GM12878 (cell line): ENCODE measurements at regions of chr1 and their contacts with region 1.

Region 1: GRCh38 chr1:19390901-19391595 is 78.9 kb downstream of the SLC66A1 start:
- DNase-seq: peak; percentile 70
- ATAC-seq: peak; percentile 82
- H3K4me3 ChIP-seq: peak overlapping the region; percentile 63; the same call in 1 of the 2 replicates
- H3K27ac ChIP-seq: peak overlapping the region; percentile 81
- H3K4me1 ChIP-seq: peaks cover 41% of the 10 kb centered on the region
- H3K27me3 ChIP-seq: no peaks in the 10 kb centered on the region
- CTCF ChIP-seq: peak; percentile 81 to 92 (median 84)
- EP300 ChIP-seq: no peak; a peak in 1 of 4 replicates
- POLR2A ChIP-seq: no peak
- RAD21 ChIP-seq: peak; percentile 69

Region 2: DNA sequence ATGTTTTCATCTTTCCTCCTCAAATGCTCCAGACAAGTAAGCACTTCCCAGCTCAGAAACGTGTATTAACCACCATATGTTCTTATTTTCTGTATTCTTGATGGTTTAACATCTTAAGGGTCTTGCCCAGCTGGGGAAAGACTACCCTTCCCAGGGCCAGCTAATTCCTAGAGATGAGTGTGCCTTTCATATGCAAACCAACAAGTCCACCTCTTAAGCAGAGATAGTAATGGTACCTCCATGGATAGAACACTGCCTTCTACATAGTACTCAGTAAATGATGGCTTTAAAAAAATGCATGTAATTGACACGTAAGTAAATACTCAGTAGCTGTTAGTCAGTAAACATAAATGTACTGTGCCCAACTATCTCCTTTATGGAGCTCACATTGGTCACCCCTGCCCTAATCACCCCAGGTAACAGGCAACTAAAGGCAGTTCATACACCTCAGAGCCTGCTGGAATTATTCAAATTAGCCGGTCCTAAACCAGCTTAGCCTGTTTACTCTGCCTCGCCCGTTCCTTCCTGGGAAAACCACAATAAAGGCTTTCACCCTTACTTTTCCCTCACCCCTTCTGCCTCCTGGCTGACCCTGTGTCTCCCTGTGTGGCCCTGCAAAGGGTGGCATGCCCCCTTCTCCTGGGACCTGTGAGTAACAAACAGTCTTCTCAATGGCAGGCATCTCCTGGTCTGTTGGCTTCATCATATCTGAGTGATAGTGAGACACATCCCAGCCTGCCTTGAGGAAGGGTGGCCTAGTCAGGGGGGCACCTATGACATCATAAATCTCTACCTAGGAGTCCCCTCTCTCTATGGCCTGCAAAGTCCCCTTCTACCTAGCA is 950.4 kb before region 1 on chr1:
- CTCF ChIA-PET with region 1: no interaction called
- POLR2A ChIA-PET with region 1: no interaction called
- RAD21 ChIA-PET with region 1: no interaction called
- SMC1A ChIA-PET with region 1: no interaction called
- in situ Hi-C with region 1: no loop called
- intact Hi-C with region 1: no loop called
- DNase-seq: no peak
- ATAC-seq: no peak
- H3K4me3 ChIP-seq: no peak overlapping the region
- H3K27ac ChIP-seq: no peak overlapping the region
- H3K4me1 ChIP-seq: no peaks in the 10 kb centered on the region
- H3K27me3 ChIP-seq: no peaks in the 10 kb centered on the region; a peak in 1 of 4 replicates
- CTCF ChIP-seq: no peak
- EP300 ChIP-seq: no peak
- POLR2A ChIP-seq: no peak
- RAD21 ChIP-seq: no peak

Region 3: GRCh38 chr1:19468397-19468956 is 77.4 kb after region 1 on chr1:
- CTCF ChIA-PET with region 1: interaction called, 13 read pairs
- POLR2A ChIA-PET with region 1: no interaction called
- RAD21 ChIA-PET with region 1: interaction called, 8 read pairs
- SMC1A ChIA-PET with region 1: interaction called, 6 read pairs
- in situ Hi-C with region 1: no loop called
- intact Hi-C with region 1: no loop called
- DNase-seq: no peak
- ATAC-seq: peak; percentile 88
- H3K4me3 ChIP-seq: peak overlapping the region; percentile 3; the same call in 1 of the 2 replicates
- H3K27ac ChIP-seq: peak overlapping the region; percentile 28
- H3K4me1 ChIP-seq: peaks cover 34% of the 10 kb centered on the region
- H3K27me3 ChIP-seq: no peaks in the 10 kb centered on the region
- CTCF ChIP-seq: peak in 1 of 3 experiments; percentile 18; a peak in 1 of 6 replicates
- EP300 ChIP-seq: no peak
- POLR2A ChIP-seq: 0 out of 2 replicates have a peak, but pooled peaks have one; percentile 35
- RAD21 ChIP-seq: no peak

Region 4: GRCh38 chr1:19485362-19486187 is 94.5 kb after region 1 on chr1 and contains the start of gene CAPZB:
- CTCF ChIA-PET with region 1: interaction called, 19 read pairs
- POLR2A ChIA-PET with region 1: interaction called, 3 read pairs
- RAD21 ChIA-PET with region 1: interaction called, 11 read pairs
- SMC1A ChIA-PET with region 1: interaction called, 10 read pairs
- in situ Hi-C with region 1: no loop called
- intact Hi-C with region 1: loop called (anchors 1 kb)
- DNase-seq: no peak
- ATAC-seq: peak; percentile 85
- H3K4me3 ChIP-seq: peak within 1 kb of the TSS; percentile 99
- H3K27ac ChIP-seq: peak within 1 kb of the TSS; percentile 98
- H3K4me1 ChIP-seq: peaks cover 19% of the 10 kb centered on the region
- H3K27me3 ChIP-seq: no peaks in the 10 kb centered on the region
- CTCF ChIP-seq: no peak
- EP300 ChIP-seq: no peak
- POLR2A ChIP-seq: peak; percentile 95
- RAD21 ChIP-seq: no peak
- polyA plus RNA-seq, gene CAPZB: 121 to 147 TPM

Region 5: DNA sequence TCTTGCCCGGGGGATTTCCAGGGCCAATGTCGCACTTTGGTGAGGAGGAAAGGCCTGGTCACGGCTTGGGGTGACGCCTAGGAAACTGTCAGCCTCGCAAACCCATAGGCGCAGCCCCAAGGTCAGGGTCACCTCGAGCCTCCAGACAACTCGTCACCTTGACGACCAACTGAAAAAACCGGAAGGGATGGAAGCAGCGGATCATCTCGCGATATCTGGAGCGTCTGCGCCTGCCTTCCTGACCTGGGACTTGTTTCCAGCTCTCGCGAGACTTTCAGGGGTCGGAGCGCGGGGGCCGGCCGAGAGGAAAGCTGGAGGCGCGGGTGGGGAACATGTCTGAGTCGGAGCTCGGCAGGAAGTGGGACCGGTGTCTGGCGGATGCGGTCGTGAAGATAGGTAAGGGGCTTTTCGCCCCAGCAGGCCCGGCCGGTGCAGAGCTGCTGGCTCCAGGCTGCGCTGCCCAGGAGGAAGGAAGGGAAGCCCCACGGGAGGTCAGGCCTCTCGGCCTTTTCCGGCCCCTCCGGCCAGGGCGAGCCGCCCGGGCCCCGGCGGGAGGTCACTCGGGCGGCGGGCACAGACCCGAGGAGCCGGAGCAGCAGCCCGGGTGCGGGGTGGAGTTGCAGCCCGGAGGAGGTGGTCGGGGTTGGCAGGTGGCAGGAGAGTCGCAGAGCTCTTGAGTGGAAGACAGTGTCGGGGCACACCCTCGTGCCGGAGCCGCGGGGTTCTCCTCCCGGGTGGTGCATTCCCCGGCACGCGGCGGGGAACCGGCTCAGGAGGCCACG is 205.9 kb after region 1 on chr1:
- CTCF ChIA-PET with region 1: interaction called, 6 read pairs
- POLR2A ChIA-PET with region 1: interaction called, 3 read pairs
- RAD21 ChIA-PET with region 1: interaction called, 5 read pairs
- SMC1A ChIA-PET with region 1: interaction called, 3 read pairs
- in situ Hi-C with region 1: no loop called
- intact Hi-C with region 1: loop called (anchors 5 kb)
- DNase-seq: peak; percentile 99
- ATAC-seq: peak; percentile 89
- H3K4me3 ChIP-seq: peak overlapping the region; percentile 88
- H3K27ac ChIP-seq: peak overlapping the region; percentile 99
- H3K4me1 ChIP-seq: peaks cover 9% of the 10 kb centered on the region
- H3K27me3 ChIP-seq: no peaks in the 10 kb centered on the region
- CTCF ChIP-seq: no peak
- EP300 ChIP-seq: peak; percentile 55 to 58; a peak in 3 of 4 replicates
- POLR2A ChIP-seq: peak; percentile 89
- RAD21 ChIP-seq: no peak

Region 6: GRCh38 chr1:19651141-19651737 is 260.2 kb after region 1 on chr1:
- CTCF ChIA-PET with region 1: interaction called, 10 read pairs
- POLR2A ChIA-PET with region 1: no interaction called
- RAD21 ChIA-PET with region 1: interaction called, 5 read pairs
- SMC1A ChIA-PET with region 1: interaction called, 3 read pairs
- in situ Hi-C with region 1: loop called (anchors 5 kb)
- intact Hi-C with region 1: loop called (anchors 2 kb)
- DNase-seq: no peak
- ATAC-seq: peak; percentile 81
- H3K4me3 ChIP-seq: no peak overlapping the region
- H3K27ac ChIP-seq: no peak overlapping the region
- H3K4me1 ChIP-seq: no peaks in the 10 kb centered on the region
- H3K27me3 ChIP-seq: no peaks in the 10 kb centered on the region; a peak in 1 of 4 replicates
- CTCF ChIP-seq: peak; percentile 59 to 86 (median 74)
- EP300 ChIP-seq: no peak
- POLR2A ChIP-seq: no peak
- RAD21 ChIP-seq: peak; percentile 83

Region 7: DNA sequence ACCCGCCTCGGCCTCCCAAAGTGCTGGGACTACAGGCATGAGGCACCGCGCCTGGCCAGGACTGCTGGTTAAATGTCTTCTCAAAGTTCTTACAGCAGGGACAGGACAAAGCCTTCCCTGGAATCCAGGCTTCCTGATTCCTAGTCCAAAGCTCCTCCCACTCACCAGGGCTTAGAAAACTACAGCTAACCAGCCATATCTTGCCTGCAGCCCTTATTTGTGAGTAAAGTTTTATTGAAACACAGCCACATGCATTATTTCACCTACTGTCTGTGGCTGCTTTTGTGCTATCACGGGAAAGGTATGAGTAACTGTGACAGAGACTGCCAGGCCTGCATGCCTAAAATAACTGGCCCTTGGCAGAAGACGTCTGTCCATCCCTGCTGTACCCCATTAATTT is 384.3 kb after region 1 on chr1:
- CTCF ChIA-PET with region 1: no interaction called
- POLR2A ChIA-PET with region 1: no interaction called
- RAD21 ChIA-PET with region 1: no interaction called
- SMC1A ChIA-PET with region 1: no interaction called
- in situ Hi-C with region 1: no loop called
- intact Hi-C with region 1: no loop called
- DNase-seq: no peak
- ATAC-seq: no peak
- H3K4me3 ChIP-seq: no peak overlapping the region
- H3K27ac ChIP-seq: no peak overlapping the region
- H3K4me1 ChIP-seq: no peaks in the 10 kb centered on the region
- H3K27me3 ChIP-seq: no peaks in the 10 kb centered on the region
- CTCF ChIP-seq: no peak
- EP300 ChIP-seq: no peak
- POLR2A ChIP-seq: no peak
- RAD21 ChIP-seq: no peak